Spleen (tissue), 13 donors: ENCODE measurements at regions of chr1 and their contacts with region 1.

Region 1: DNA sequence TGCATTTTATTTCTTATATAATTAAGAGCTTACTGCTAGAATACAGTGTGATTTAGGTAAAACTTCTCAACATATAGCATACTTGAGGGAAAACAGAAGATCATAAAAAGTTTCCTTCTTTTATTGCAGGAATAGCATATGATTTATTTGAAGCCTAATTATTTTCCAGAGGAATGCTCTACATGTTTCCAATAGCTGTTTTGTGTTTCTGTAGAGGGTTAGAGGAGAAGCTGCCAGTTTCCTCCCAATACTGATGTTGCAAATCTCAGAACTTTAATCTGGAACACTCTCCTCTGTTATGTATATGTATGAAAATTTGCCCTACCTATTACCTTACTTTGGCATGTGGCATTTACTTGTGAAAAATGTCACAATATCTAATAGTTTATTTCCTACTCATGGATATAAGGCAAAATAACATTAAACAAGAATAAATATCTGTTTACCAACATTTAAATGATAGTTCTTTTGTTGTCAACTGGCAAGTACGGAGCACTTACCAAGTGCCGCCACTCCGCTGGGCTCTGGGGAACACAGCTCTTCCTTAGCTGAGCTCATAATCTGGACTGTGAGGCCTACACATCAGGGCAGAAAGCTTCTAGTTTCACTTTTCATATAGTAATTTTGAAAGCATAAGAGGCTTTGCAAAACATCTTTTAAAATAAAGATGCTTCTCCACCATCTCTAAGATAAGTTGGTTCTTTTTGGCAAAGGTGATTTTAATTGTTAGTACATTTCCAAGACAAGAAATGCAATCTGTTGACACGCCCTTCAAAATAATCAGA is 239.8 kb upstream of the C1orf105 start:
- DNase-seq: peak; percentile 87
- H3K4me3 ChIP-seq: peak overlapping the region in 2 of 8 donors; percentile 10 to 52
- H3K27ac ChIP-seq: peak overlapping the region; percentile 83 to 94 (median 88)
- H3K4me1 ChIP-seq: peaks cover 27 to 64% (median 44%) of the 10 kb centered on the region in 6 donors
- H3K27me3 ChIP-seq: no peaks in the 10 kb centered on the region
- CTCF ChIP-seq: peak in 1 of 11 experiments; percentile 14
- POLR2A ChIP-seq: no peak

Region 2: GRCh38 chr1:172343240-172344160 is 162.8 kb after region 1 on chr1:
- intact Hi-C with region 1: no loop called
- DNase-seq: no peak
- H3K4me3 ChIP-seq: no peak overlapping the region
- H3K27ac ChIP-seq: peak overlapping the region in 7 of 8 donors; percentile 2 to 58 (median 33)
- H3K4me1 ChIP-seq: peaks cover 0 to 37% (median 29%) of the 10 kb centered on the region in 6 donors
- H3K27me3 ChIP-seq: no peaks in the 10 kb centered on the region
- CTCF ChIP-seq: no peak
- POLR2A ChIP-seq: no peak

Region 3: GRCh38 chr1:172398970-172399755 is 218.5 kb after region 1 on chr1:
- intact Hi-C with region 1: loop called (anchors 10 kb)
- DNase-seq: no peak
- H3K4me3 ChIP-seq: peak overlapping the region in 1 of 8 donors; percentile 41
- H3K27ac ChIP-seq: peak overlapping the region; percentile 15 to 79 (median 72)
- H3K4me1 ChIP-seq: peaks cover 18 to 72% (median 37%) of the 10 kb centered on the region in 6 donors
- H3K27me3 ChIP-seq: no peaks in the 10 kb centered on the region
- CTCF ChIP-seq: peak in 9 of 11 experiments; percentile 34 to 71 (median 52)
- POLR2A ChIP-seq: no peak